PC-3 (cell line): ENCODE measurements at regions of chr20 and their contacts with region 1.

Region 1: DNA sequence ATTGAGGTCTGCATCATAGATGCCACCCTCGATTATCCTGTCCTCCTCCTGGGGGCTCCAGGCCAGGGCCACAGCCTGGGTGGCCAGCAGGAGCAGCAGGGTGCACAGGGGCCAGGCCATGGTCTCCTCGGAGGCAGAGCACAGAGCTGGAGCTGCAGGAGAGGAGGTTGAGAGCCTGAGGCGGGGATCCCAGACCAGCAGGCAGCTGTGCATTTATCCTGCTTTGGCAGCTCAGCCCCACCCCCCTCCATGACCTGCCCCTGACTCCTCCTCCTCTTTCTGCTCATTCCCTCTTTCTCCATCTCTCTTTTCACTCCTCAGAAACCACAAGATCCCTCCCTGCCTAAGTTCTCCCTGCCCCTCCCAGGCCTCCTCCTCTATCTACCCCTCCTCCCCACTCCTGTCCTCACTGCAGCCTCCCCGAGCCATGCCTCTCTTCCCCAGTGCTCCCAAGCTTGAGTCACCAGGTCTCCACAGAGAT is at the start of gene CST2:
- DNase-seq: peak; percentile 56
- ATAC-seq: no peak
- H3K4me3 ChIP-seq: no peak within 1 kb of the TSS
- H3K27ac ChIP-seq: no peak within 1 kb of the TSS
- H3K4me1 ChIP-seq: peaks cover 21% of the 10 kb centered on the region
- H3K27me3 ChIP-seq: no peaks in the 10 kb centered on the region
- CTCF ChIP-seq: no peak
- total RNA-seq, gene CST2: not detected in 2 replicates

Region 2: DNA sequence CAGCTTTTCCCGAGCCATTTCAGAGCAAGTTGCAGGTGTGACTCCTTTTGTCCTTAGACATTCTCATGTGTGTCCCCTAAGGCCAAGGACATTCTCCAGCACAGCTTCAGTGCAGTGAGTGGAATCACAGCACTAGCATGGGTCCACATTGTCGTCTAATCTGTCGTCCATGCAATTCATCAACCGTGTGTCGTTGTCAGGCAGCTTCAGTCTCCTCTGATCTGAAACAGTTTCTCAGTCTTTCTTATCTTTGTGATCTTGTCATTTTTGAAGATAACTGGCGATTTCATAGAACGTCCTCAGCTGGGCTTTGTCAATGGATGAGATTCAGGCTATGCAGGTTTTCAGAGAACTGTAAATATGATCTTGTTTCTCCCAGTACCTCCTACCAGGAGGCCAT is 31.7 kb before region 1 on chr20:
- CTCF ChIA-PET with region 1: no interaction called
- POLR2A ChIA-PET with region 1: no interaction called
- intact Hi-C with region 1: no loop called
- DNase-seq: no peak
- ATAC-seq: no peak
- H3K4me3 ChIP-seq: no peak overlapping the region
- H3K27ac ChIP-seq: peak overlapping the region; percentile 10; the same call in 1 of the 2 replicates
- H3K4me1 ChIP-seq: peaks cover 19% of the 10 kb centered on the region
- H3K27me3 ChIP-seq: peaks cover 6% of the 10 kb centered on the region; the same call in 1 of the 2 replicates
- CTCF ChIP-seq: no peak

Region 3: DNA sequence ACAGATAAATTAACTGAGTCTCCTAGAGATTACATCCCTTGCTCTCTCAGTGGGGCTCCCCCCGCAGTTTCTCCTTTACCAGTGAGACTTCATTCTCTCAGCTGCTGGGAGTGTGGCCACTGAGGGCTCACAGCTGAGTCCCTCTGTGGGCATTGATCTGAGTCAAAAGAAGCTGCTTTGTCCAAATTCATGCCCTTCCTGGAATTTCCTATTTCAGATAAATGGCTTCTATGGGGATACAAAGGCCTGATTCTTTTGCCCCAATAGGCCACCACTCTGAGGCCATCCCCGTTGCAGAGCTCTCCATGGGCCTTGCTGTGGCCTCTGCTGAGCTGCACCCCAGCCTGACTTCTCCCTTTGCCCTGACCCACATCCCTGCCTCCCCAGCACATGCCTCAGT is 42.9 kb after region 1 on chr20:
- CTCF ChIA-PET with region 1: no interaction called
- POLR2A ChIA-PET with region 1: interaction called, 14 read pairs
- intact Hi-C with region 1: no loop called
- DNase-seq: no peak
- ATAC-seq: no peak
- H3K4me3 ChIP-seq: no peak overlapping the region
- H3K27ac ChIP-seq: no peak overlapping the region
- H3K4me1 ChIP-seq: no peaks in the 10 kb centered on the region
- H3K27me3 ChIP-seq: peaks cover 84% of the 10 kb centered on the region
- CTCF ChIP-seq: no peak